GM13976 (cell line): ENCODE measurements at regions of chr14 and their contacts with region 1.

Region 1: GRCh38 chr14:28751467-28752058 is 15.0 kb upstream of the FOXG1 start:
- DNase-seq: peak; percentile 59
- CTCF ChIP-seq: peak; percentile 65

Region 2: GRCh38 chr14:28867571-28867970 is 116.0 kb after region 1 on chr14:
- in situ Hi-C with region 1: no loop called
- DNase-seq: no peak
- CTCF ChIP-seq: no peak

Region 3: DNA sequence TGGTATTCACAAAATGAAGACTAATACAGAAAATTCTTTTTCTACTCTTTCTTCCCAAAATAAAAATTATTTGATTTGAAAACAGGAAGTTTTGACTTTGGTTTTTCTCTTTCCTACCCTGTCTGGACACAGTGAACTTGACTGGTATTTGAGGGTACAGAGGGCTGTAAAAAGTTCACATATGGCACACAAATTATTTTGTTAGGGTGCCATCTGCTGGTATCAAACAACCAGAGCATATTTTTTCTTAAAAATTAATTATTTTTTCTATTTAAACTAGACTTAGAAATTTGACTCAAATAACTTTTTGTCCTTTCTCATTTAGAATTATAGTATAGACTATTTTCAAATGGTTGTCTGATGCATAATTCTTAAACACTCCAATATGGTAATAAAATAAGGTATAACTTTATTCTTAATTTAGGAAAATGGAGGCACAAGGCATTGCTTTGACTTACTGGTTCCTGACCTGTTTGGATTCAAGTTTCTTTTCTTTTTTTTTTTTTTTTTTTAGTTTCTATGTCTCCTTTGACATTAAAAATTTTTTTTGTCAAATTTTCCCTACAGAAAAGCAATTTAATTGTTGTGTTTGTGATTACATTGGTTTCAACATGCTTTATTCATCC is 785.4 kb after region 1 on chr14:
- in situ Hi-C with region 1: loop called (anchors 10 kb)
- DNase-seq: no peak
- CTCF ChIP-seq: no peak

Region 4: DNA sequence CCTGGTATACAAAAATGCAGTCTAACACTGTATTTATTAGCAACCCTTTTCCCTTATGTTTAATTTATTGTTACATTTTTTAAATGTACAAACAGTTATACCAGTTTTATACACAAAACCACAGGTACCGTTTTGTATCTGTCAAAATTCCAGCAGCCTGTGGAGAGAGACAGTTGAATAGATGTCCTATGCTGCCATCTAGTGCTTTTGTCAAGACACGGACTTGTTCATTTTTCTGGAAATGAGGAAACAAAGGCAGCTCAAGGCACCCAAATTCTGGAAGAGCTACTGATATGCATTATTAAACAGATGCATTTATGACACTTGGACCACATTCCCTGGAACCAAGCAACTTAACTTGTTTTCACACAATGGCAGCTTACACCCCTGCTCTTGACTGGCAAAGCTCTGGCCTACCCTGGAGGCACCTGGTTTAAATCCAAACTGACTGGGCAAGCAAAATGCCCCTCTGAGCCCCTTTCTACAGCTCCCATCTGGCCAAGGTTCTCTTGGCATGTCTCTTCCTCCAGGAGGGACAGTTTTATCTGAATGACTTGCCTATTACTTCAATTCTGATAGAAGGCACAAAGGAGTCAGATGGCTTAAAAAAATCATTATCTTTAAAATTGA is 1463.0 kb after region 1 on chr14:
- in situ Hi-C with region 1: loop called (anchors 25 kb)
- DNase-seq: peak; percentile 1
- CTCF ChIP-seq: no peak